Prostate gland (tissue), 2 donors: ENCODE measurements at regions of chr14 and their contacts with region 1.

Region 1: GRCh38 chr14:75002392-75003249 is at the start of gene EIF2B2:
- DNase-seq: peak; percentile 98
- H3K4me3 ChIP-seq: peak within 1 kb of the TSS; percentile 53 to 67
- H3K27ac ChIP-seq: peak within 1 kb of the TSS; percentile 67 to 80
- H3K4me1 ChIP-seq: peaks cover 8% of the 10 kb centered on the region
- H3K27me3 ChIP-seq: no peaks in the 10 kb centered on the region
- CTCF ChIP-seq: peak in 2 of 4 experiments; percentile 46 to 52
- POLR2A ChIP-seq: peak; percentile 45
- total RNA-seq, gene EIF2B2: 43.9 to 60.4 TPM

Region 2: GRCh38 chr14:74945823-74946682 is 56.6 kb before region 1 on chr14:
- intact Hi-C with region 1: loop called (anchors 5 kb)
- DNase-seq: peak; percentile 66
- H3K4me3 ChIP-seq: no peak overlapping the region
- H3K27ac ChIP-seq: peak overlapping the region in 1 of 2 donors; percentile 25
- H3K4me1 ChIP-seq: no peaks in the 10 kb centered on the region
- H3K27me3 ChIP-seq: no peaks in the 10 kb centered on the region
- CTCF ChIP-seq: peak; percentile 72 to 91 (median 81)
- POLR2A ChIP-seq: no peak